ENCODE measurements at regions of chr16 and their contacts with region 1.

Region 1: DNA sequence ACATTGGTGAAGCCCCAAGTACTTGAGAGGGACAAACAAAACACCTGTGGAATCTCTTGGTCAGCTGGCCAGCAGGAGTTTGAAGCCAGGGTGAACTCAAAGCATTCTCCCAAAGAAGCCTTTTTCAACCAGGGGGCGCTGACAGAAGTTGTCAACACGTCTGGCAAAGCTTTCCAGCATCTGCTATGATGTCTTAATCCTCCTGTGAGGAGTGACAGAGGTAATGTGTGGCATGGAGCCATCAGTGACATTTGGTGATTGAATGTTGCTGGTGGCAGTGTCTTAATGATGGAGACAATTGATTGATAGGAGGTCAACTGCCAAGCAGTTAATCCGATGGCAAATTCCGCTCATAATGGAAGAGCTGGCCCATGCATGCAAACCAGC is 257.6 kb upstream of the HSBP1 start:
- DNase-seq: peak; percentile 29
- ATAC-seq: no peak
- H3K4me3 Mint-ChIP-seq: no peak overlapping the region
- H3K27ac Mint-ChIP-seq: no peak overlapping the region
- H3K4me1 Mint-ChIP-seq: peaks cover 20% of the 10 kb centered on the region
- H3K27me3 Mint-ChIP-seq: no peaks in the 10 kb centered on the region
- CTCF ChIP-seq: no peak

Region 2: GRCh38 chr16:83717814-83718213 is 167.6 kb after region 1 on chr16:
- CTCF ChIA-PET with region 1: interaction called, 11 read pairs
- POLR2A ChIA-PET with region 1: no interaction called
- DNase-seq: no peak
- ATAC-seq: no peak
- H3K4me3 Mint-ChIP-seq: no peak overlapping the region
- H3K27ac Mint-ChIP-seq: 0 out of 2 replicates have a peak overlapping the region, but pooled peaks have one; percentile 16
- H3K4me1 Mint-ChIP-seq: peaks cover 15% of the 10 kb centered on the region
- H3K27me3 Mint-ChIP-seq: no peaks in the 10 kb centered on the region
- CTCF ChIP-seq: no peak

Measured in WTC11 (cell line).